Activated T-helper 1 cell treated with anti-CD3 and anti-CD28 coated beads, Interleukin-12 subunit alpha, Interleukin-12 subunit beta, Interleukin-2, Interleukin-4 antibody, amounts not matched to agents 30 ng/mL and 10 ng/mL and 1 ng/mL, durations not matched to agents 14 hours and 24 hours and 36 hours (primary cell): ENCODE measurements at regions of chr6 and their contacts with region 1.

Region 1: DNA sequence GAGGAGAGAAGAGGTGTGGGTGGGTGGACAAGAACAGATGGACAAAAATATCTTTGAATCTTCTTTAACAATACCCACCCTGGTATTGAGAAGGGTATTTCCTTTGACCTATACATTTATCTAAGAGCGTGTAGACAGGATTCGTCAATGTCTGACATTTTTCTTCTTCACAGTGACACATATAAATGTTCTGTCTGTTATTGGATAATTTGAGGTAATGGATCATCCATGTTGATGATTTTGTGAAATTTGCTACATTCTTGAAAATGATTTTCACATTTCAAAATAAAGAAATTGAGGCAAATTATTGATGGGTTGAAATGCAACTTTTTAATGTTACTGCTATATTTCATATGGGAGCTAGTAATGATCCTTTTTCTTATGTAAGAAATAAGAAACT is 770.7 kb upstream of the EPHA7 start:
- DNase-seq: no peak
- H3K4me3 Mint-ChIP-seq: no peak overlapping the region
- H3K27ac Mint-ChIP-seq: no peak overlapping the region
- H3K4me1 Mint-ChIP-seq: no peaks in the 10 kb centered on the region
- H3K27me3 Mint-ChIP-seq: no peaks in the 10 kb centered on the region

Region 2: DNA sequence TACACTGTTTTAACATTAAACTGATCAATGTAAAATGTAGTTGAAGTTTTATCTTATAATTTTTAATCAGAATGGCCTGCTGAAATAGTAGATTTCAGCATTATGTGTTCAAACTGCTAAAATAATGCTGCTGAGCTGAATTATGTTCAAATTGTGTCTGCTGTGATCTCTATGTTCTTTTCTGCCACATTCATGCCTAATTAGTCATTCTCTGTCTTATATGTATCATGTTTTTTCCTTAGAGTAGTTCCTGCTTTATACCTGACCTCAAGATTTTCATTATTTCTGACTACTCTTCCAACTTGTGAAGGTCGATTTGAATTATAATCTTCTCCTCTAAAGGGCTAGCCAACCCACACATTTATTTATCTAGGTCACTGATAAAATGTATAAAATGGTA is 293.9 kb before region 1 on chr6:
- intact Hi-C with region 1: no loop called
- DNase-seq: no peak
- H3K4me3 Mint-ChIP-seq: no peak overlapping the region
- H3K27ac Mint-ChIP-seq: no peak overlapping the region
- H3K4me1 Mint-ChIP-seq: no peaks in the 10 kb centered on the region
- H3K27me3 Mint-ChIP-seq: no peaks in the 10 kb centered on the region

Region 3: DNA sequence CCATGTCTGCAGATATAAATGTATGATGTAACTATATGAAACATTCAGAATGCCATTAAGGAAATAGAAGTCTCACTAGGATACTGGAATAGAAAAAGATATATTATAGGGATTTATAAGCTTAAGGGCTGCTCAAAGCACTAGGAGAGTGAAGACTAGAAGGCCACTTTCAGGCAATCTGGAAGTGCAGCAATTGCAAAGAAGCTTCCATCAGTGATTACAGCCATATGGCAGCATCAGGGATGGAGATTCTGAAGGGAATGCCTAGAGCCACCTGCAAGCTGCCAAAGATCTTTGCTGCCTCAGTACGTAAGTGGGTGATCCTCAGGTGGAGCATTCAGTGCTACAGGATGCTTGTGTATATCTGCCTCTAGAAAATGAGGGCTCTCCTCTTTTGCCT is 25.5 kb after region 1 on chr6:
- intact Hi-C with region 1: loop called (anchors 1 kb)
- DNase-seq: no peak
- H3K4me3 Mint-ChIP-seq: no peak overlapping the region
- H3K27ac Mint-ChIP-seq: no peak overlapping the region
- H3K4me1 Mint-ChIP-seq: no peaks in the 10 kb centered on the region
- H3K27me3 Mint-ChIP-seq: no peaks in the 10 kb centered on the region

Region 4: DNA sequence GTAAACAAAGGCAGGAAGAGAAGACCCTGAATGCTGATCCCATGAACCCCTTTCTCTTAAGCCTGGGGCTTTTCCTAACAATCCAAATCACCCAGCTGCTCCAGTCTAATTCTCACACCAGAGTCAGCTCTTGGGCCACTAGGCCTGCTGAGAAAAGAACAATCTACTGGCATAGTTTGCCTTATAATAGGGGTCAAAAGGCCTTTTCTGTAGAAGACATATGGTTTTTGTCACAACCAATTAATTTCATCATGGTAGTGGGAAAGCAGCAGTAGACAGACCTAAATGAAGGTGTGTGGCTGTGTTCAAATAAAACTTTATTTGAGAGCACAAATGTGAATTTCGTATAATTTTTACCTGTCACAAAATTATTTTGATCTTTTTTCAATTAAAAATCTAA is 224.0 kb after region 1 on chr6:
- intact Hi-C with region 1: no loop called
- DNase-seq: no peak
- H3K4me3 Mint-ChIP-seq: no peak overlapping the region
- H3K27ac Mint-ChIP-seq: no peak overlapping the region
- H3K4me1 Mint-ChIP-seq: no peaks in the 10 kb centered on the region
- H3K27me3 Mint-ChIP-seq: no peaks in the 10 kb centered on the region